ENCODE measurements at regions of chr3 and their contacts with region 1.

Region 1: DNA sequence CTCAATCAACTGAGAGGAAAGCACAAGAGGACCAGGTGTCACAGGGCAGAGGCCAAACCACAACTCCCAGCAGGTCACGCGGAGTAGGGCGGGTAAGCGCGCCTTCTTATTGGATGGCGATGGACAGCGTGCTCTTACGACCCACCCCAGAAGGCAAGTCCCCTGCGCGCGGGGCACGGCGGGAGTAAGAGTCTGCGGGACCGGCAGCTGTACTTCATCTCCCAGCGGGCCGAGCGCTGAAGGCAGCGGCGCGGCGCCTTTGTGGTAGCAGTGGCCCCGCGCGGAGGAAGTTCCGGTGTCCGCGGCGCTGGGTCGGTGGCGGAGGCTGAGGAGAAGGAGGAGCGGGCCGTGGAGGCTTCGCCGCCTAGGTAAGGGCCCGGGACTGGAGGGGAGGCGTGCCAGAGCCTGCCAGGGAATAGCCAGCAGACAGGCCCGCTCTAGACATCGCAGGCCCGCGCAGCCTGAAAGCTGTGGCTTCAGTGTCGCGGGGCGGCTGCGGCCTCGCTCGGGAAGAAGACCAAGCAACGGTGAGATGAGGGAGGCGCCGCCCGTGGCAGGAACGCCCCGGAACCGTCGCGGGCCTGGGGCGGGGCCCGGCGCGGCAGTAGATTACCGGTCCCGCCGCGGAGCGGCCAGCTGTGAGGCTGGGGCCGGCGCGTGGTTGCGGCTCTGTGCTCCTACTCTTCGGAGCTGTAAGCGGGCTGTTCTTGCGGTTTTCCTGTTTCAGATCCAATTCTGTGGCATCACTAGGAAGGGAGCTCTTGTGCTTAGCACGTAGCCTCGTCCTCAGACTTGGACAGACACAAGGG is at the start of gene RBM6:
- DNase-seq: peak; percentile 97
- ATAC-seq: peak; percentile 93
- H3K4me3 ChIP-seq: peak within 1 kb of the TSS; percentile 81 to 98 (median 90)
- H3K4me3 Mint-ChIP-seq: peak within 1 kb of the TSS; percentile 99
- H3K27ac ChIP-seq: peak within 1 kb of the TSS; percentile 89 to 95
- H3K27ac Mint-ChIP-seq: peak within 1 kb of the TSS; percentile 100
- H3K4me1 ChIP-seq: peaks cover 23 to 32% of the 10 kb centered on the region in 2 donors
- H3K4me1 Mint-ChIP-seq: peaks cover 36% of the 10 kb centered on the region
- H3K27me3 ChIP-seq: no peaks in the 10 kb centered on the region
- H3K27me3 Mint-ChIP-seq: no peaks in the 10 kb centered on the region
- CTCF ChIP-seq: no peak
- total RNA-seq, gene RBM6: 285 and 300 TPM in 2 replicates

Region 2: GRCh38 chr3:49786241-49786958 is 153.7 kb before region 1 on chr3 and contains the start of gene IP6K1:
- CTCF ChIA-PET with region 1: no interaction called
- POLR2A ChIA-PET with region 1: no interaction called
- intact Hi-C with region 1: loop called (anchors 5 kb)
- DNase-seq: peak; percentile 99
- ATAC-seq: peak; percentile 99
- H3K4me3 ChIP-seq: peak within 1 kb of the TSS; percentile 69 to 98 (median 88)
- H3K4me3 Mint-ChIP-seq: peak within 1 kb of the TSS; percentile 97
- H3K27ac ChIP-seq: peak within 1 kb of the TSS; percentile 94 to 95
- H3K27ac Mint-ChIP-seq: peak within 1 kb of the TSS; percentile 99
- H3K4me1 ChIP-seq: peaks cover 17 to 34% of the 10 kb centered on the region in 2 donors
- H3K4me1 Mint-ChIP-seq: peaks cover 26% of the 10 kb centered on the region
- H3K27me3 ChIP-seq: no peaks in the 10 kb centered on the region
- H3K27me3 Mint-ChIP-seq: no peaks in the 10 kb centered on the region
- CTCF ChIP-seq: no peak
- total RNA-seq, gene IP6K1: 73.1 and 77.8 TPM in 2 replicates

Region 3: GRCh38 chr3:49856181-49857005 is 83.7 kb before region 1 on chr3 and contains the start of gene TRAIP:
- CTCF ChIA-PET with region 1: no interaction called
- POLR2A ChIA-PET with region 1: no interaction called
- intact Hi-C with region 1: loop called (anchors 1 kb)
- DNase-seq: peak; percentile 98
- ATAC-seq: peak; percentile 100
- H3K4me3 ChIP-seq: peak within 1 kb of the TSS; percentile 53 to 91 (median 69)
- H3K4me3 Mint-ChIP-seq: peak within 1 kb of the TSS; percentile 91
- H3K27ac ChIP-seq: peak within 1 kb of the TSS; percentile 56 to 59
- H3K27ac Mint-ChIP-seq: peak within 1 kb of the TSS; percentile 90
- H3K4me1 ChIP-seq: peaks cover 10 to 15% of the 10 kb centered on the region in 2 donors
- H3K4me1 Mint-ChIP-seq: peaks cover 11% of the 10 kb centered on the region
- H3K27me3 ChIP-seq: peaks cover 0 to 3% (median 0%) of the 10 kb centered on the region in 4 experiments
- H3K27me3 Mint-ChIP-seq: no peaks in the 10 kb centered on the region
- CTCF ChIP-seq: no peak
- total RNA-seq, gene TRAIP: 8.7 and 9.9 TPM in 2 replicates

Region 4: GRCh38 chr3:49929331-49930240 is 10.5 kb before region 1 on chr3 and contains the start of gene MON1A:
- CTCF ChIA-PET with region 1: interaction called, 17 read pairs
- POLR2A ChIA-PET with region 1: interaction called, 22 read pairs
- intact Hi-C with region 1: loop called (anchors 1 kb)
- DNase-seq: peak; percentile 86
- ATAC-seq: peak; percentile 93
- H3K4me3 ChIP-seq: peak within 1 kb of the TSS; percentile 63 to 96 (median 92)
- H3K4me3 Mint-ChIP-seq: peak within 1 kb of the TSS; percentile 85
- H3K27ac ChIP-seq: peak within 1 kb of the TSS; percentile 70 to 89
- H3K27ac Mint-ChIP-seq: peak within 1 kb of the TSS; percentile 81
- H3K4me1 ChIP-seq: peaks cover 8 to 17% of the 10 kb centered on the region in 2 donors
- H3K4me1 Mint-ChIP-seq: peaks cover 11% of the 10 kb centered on the region
- H3K27me3 ChIP-seq: no peaks in the 10 kb centered on the region
- H3K27me3 Mint-ChIP-seq: no peaks in the 10 kb centered on the region
- CTCF ChIP-seq: peak; percentile 35
- total RNA-seq, gene MON1A: 5.6 and 6.6 TPM in 2 replicates

Region 5: DNA sequence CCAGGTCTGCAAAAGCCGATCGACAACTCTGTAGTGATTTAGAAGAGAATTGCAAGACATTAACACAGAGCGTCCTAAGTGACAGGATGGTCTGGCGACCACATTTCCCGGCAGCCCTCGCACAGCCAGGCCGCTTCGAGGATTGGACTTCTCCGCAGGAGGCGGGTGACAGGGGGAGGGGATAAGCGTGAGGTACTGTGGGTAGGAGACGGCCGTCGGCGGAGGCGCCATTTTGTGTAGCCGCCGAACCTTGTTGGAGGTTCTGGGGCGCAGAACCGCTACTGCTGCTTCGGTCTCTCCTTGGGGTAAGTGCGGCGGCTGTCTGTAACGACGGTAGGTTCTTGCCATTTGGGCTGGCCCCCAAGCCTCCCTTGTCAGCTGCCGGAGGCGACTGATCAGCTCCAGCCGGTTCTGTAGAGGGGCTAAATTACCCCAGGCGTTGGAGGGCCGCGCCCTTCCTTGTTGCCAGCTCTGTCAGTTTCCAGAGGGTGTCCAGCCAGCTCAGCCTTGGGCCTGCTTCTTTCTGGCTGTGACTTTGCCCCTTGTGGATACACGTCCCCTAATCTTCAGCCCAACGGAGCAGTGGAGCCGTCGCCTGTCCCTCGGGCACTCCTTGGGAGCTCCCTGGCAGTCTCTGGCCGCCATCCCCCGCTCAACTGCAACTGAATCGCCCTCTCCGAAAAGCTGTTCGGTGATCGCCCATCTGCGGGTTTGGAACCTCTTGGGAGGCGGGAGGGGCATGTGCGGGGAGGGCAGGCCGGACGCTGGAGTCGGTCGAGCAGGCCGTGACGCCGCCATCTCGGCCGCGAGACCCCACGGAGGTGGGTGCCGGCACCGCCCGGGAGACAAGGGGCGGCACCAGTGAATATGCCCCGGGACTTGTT is 148.9 kb after region 1 on chr3 and contains the start of gene RBM5:
- CTCF ChIA-PET with region 1: no interaction called
- POLR2A ChIA-PET with region 1: interaction called, 3 read pairs
- intact Hi-C with region 1: loop called (anchors 5 kb)
- DNase-seq: peak; percentile 91
- ATAC-seq: peak; percentile 100
- H3K4me3 ChIP-seq: peak within 1 kb of the TSS; percentile 92 to 98 (median 96)
- H3K4me3 Mint-ChIP-seq: peak within 1 kb of the TSS; percentile 97
- H3K27ac ChIP-seq: peak within 1 kb of the TSS; percentile 94 to 96
- H3K27ac Mint-ChIP-seq: peak within 1 kb of the TSS; percentile 97
- H3K4me1 ChIP-seq: peaks cover 18 to 23% of the 10 kb centered on the region in 2 donors
- H3K4me1 Mint-ChIP-seq: peaks cover 27% of the 10 kb centered on the region
- H3K27me3 ChIP-seq: no peaks in the 10 kb centered on the region
- H3K27me3 Mint-ChIP-seq: no peaks in the 10 kb centered on the region
- CTCF ChIP-seq: no peak
- total RNA-seq, gene RBM5: 464 and 493 TPM in 2 replicates

Region 6: GRCh38 chr3:50298836-50299637 is 359.0 kb after region 1 on chr3 and contains the starts of genes HYAL3 and NAA80:
- CTCF ChIA-PET with region 1: no interaction called
- POLR2A ChIA-PET with region 1: no interaction called
- intact Hi-C with region 1: loop called (anchors 1 kb)
- DNase-seq: peak; percentile 100
- ATAC-seq: peak; percentile 91
- H3K4me3 ChIP-seq: peak within 1 kb of the TSS; percentile 68 to 89 (median 88)
- H3K4me3 Mint-ChIP-seq: peak within 1 kb of the TSS; percentile 100
- H3K27ac ChIP-seq: peak within 1 kb of the TSS; percentile 77 to 84
- H3K27ac Mint-ChIP-seq: peak within 1 kb of the TSS; percentile 100
- H3K4me1 ChIP-seq: peaks cover 18 to 24% of the 10 kb centered on the region in 2 donors
- H3K4me1 Mint-ChIP-seq: peaks cover 33% of the 10 kb centered on the region
- H3K27me3 ChIP-seq: no peaks in the 10 kb centered on the region
- H3K27me3 Mint-ChIP-seq: no peaks in the 10 kb centered on the region
- CTCF ChIP-seq: peak; percentile 65
- total RNA-seq, gene HYAL3: 1.9 and 3.7 TPM in 2 replicates
- total RNA-seq, gene NAA80: 33.8 and 37.8 TPM in 2 replicates

Region 7: GRCh38 chr3:51706788-51707731 is 1767.0 kb after region 1 on chr3 and contains the start of gene GRM2:
- CTCF ChIA-PET with region 1: no interaction called
- POLR2A ChIA-PET with region 1: no interaction called
- intact Hi-C with region 1: no loop called
- DNase-seq: no peak
- ATAC-seq: peak; percentile 31
- H3K4me3 ChIP-seq: no peak within 1 kb of the TSS
- H3K4me3 Mint-ChIP-seq: no peak within 1 kb of the TSS
- H3K27ac ChIP-seq: no peak within 1 kb of the TSS
- H3K27ac Mint-ChIP-seq: no peak within 1 kb of the TSS
- H3K4me1 ChIP-seq: no peaks in the 10 kb centered on the region
- H3K4me1 Mint-ChIP-seq: peaks cover 4% of the 10 kb centered on the region
- H3K27me3 ChIP-seq: no peaks in the 10 kb centered on the region
- H3K27me3 Mint-ChIP-seq: no peaks in the 10 kb centered on the region
- CTCF ChIP-seq: no peak
- total RNA-seq, gene GRM2: 0.86 and 1.1 TPM in 2 replicates